ENCODE measurements at regions of chr12 and their contacts with region 1.

Region 1: GRCh38 chr12:52380271-52380694 is 5.2 kb downstream of the KRT84 start:
- DNase-seq: peak in 8 of 10 donors; percentile 20 to 73 (median 52)
- H3K4me3 ChIP-seq: no peak overlapping the region
- H3K27ac ChIP-seq: no peak overlapping the region
- H3K27me3 ChIP-seq: peaks cover 0 to 5% (median 0%) of the 10 kb centered on the region in 45 donors
- CTCF ChIP-seq: peak in 53 of 56 donors; percentile 23 to 72 (median 53)

Region 2: GRCh38 chr12:51905471-51906429 is 474.5 kb before region 1 on chr12:
- intact Hi-C with region 1: no loop called
- DNase-seq: peak in 1 of 10 donors; percentile 12
- H3K4me3 ChIP-seq: peak overlapping the region in 5 of 59 donors; percentile 56 to 63 (median 58)
- H3K27ac ChIP-seq: peak overlapping the region in 43 of 59 donors; percentile 4 to 80 (median 55)
- H3K27me3 ChIP-seq: peaks cover 0 to 32% (median 19%) of the 10 kb centered on the region in 45 donors
- CTCF ChIP-seq: no peak

Region 3: GRCh38 chr12:52358575-52359350 is 21.5 kb before region 1 on chr12:
- intact Hi-C with region 1: no loop called
- DNase-seq: peak in 2 of 10 donors; percentile 2 to 5
- H3K4me3 ChIP-seq: no peak overlapping the region
- H3K27ac ChIP-seq: no peak overlapping the region
- H3K27me3 ChIP-seq: peaks cover 0 to 16% (median 0%) of the 10 kb centered on the region in 45 donors
- CTCF ChIP-seq: no peak

Region 4: DNA sequence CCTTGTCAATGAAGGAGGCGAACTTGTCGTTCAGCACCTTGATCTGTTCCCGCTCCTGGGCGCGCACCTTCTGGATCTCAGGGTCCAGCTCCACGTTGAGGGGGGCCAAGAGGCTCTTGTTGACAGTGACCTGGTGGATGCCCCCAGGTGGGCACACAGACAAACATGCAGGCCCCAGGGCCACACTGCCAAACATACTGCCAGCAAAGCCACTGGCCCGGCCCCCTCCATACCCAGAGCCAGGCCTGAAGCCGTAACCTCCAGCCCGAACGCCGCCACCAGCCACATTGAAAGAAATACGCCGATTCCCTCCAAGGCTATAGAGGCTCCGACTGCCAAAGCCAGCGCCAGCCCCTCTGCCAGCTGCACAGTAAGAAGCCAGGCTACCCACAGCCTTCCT is 193.0 kb after region 1 on chr12:
- intact Hi-C with region 1: loop called in 1 of 2 experiments (anchors 5 kb)
- DNase-seq: peak in 1 of 10 donors; percentile 38
- H3K4me3 ChIP-seq: no peak overlapping the region
- H3K27ac ChIP-seq: no peak overlapping the region
- H3K27me3 ChIP-seq: peaks cover 0 to 10% (median 0%) of the 10 kb centered on the region in 45 donors
- CTCF ChIP-seq: no peak

Region 5: GRCh38 chr12:52980693-52981423 is 600.6 kb after region 1 on chr12:
- intact Hi-C with region 1: loop called in 1 of 2 experiments (anchors 10 kb)
- DNase-seq: peak; percentile 76 to 93 (median 84)
- H3K4me3 ChIP-seq: no peak overlapping the region
- H3K27ac ChIP-seq: no peak overlapping the region
- H3K27me3 ChIP-seq: peaks cover 0 to 4% (median 0%) of the 10 kb centered on the region in 45 donors
- CTCF ChIP-seq: peak; percentile 84 to 100 (median 98)